Heart right ventricle (tissue), 16 donors: ENCODE measurements at regions of chr11 and their contacts with region 1.

Region 1: GRCh38 chr11:18526521-18527296 is at the start of gene TSG101:
- DNase-seq: peak; percentile 95
- ATAC-seq: peak; percentile 98 to 100 (median 99)
- H3K4me3 ChIP-seq: peak within 1 kb of the TSS; percentile 58 to 99 (median 84)
- H3K27ac ChIP-seq: peak within 1 kb of the TSS; percentile 83 to 97 (median 95)
- H3K4me1 ChIP-seq: peaks cover 5 to 43% (median 30%) of the 10 kb centered on the region in 9 donors
- H3K27me3 ChIP-seq: no peaks in the 10 kb centered on the region
- CTCF ChIP-seq: no peak
- total RNA-seq, gene TSG101: 59.7 to 77.6 (median 68.7) TPM

Region 2: GRCh38 chr11:18321980-18322711 is 204.6 kb before region 1 on chr11 and contains the starts of genes GTF2H1 and HPS5:
- intact Hi-C with region 1: loop called in 3 of 10 experiments (anchors 5 kb)
- DNase-seq: peak; percentile 92 to 97
- ATAC-seq: peak; percentile 98 to 100 (median 99)
- H3K4me3 ChIP-seq: peak within 1 kb of the TSS; percentile 70 to 93 (median 84)
- H3K27ac ChIP-seq: peak within 1 kb of the TSS; percentile 93 to 99 (median 96)
- H3K4me1 ChIP-seq: peaks cover 0 to 59% (median 45%) of the 10 kb centered on the region in 9 donors
- H3K27me3 ChIP-seq: no peaks in the 10 kb centered on the region
- CTCF ChIP-seq: no peak
- total RNA-seq, gene GTF2H1: 19.6 to 27.9 (median 25.2) TPM
- total RNA-seq, gene HPS5: 9.9 to 14.9 (median 12.5) TPM

Region 3: DNA sequence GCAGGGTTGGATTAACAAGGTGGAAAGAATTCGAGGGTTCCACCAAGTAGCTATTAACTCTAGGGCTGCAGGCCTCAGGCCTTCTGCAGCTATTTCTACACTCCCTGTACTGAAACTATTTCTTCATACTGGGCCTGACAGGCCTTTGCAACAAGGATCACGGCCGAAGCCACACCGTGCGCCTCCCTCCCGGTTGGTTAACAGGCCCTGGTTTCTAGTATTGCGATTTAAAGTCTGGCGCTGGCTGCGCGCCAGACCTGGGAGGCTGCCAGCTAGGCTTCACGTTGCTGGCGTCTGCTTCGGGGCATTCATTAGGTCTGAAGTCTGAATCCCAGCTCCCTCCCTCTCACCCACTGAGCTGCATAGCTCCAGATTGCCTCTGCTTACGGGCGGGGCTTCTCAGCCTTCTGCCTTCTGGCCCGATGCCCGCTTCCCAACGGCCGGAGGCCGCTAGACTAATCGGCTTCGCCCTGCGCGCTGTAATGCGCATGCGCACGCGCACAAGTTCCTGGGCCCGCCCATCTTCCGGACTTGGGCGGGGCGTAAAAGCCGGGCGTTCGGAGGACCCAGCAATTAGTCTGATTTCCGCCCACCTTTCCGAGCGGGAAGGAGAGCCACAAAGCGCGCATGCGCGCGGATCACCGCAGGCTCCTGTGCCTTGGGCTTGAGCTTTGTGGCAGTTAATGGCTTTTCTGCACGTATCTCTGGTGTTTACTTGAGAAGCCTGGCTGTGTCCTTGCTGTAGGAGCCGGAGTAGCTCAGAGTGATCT is 130.8 kb before region 1 on chr11:
- intact Hi-C with region 1: loop called in 3 of 10 experiments (anchors 10 kb)
- DNase-seq: peak; percentile 97 to 99
- ATAC-seq: peak; percentile 90 to 96 (median 94)
- H3K4me3 ChIP-seq: peak overlapping the region; percentile 64 to 99 (median 91)
- H3K27ac ChIP-seq: peak overlapping the region; percentile 88 to 100 (median 98)
- H3K4me1 ChIP-seq: peaks cover 4 to 52% (median 14%) of the 10 kb centered on the region in 9 donors
- H3K27me3 ChIP-seq: no peaks in the 10 kb centered on the region
- CTCF ChIP-seq: no peak

Region 4: GRCh38 chr11:18588297-18589252 is 61.9 kb after region 1 on chr11 and contains the start of gene UEVLD:
- intact Hi-C with region 1: loop called in 2 of 10 experiments (anchors 5 to 10 kb)
- DNase-seq: peak; percentile 89 to 93
- ATAC-seq: peak; percentile 96 to 99 (median 99)
- H3K4me3 ChIP-seq: peak within 1 kb of the TSS; percentile 70 to 98 (median 86)
- H3K27ac ChIP-seq: peak within 1 kb of the TSS; percentile 71 to 92 (median 87)
- H3K4me1 ChIP-seq: peaks cover 0 to 48% (median 35%) of the 10 kb centered on the region in 9 donors
- H3K27me3 ChIP-seq: no peaks in the 10 kb centered on the region
- CTCF ChIP-seq: no peak
- total RNA-seq, gene UEVLD: 13.7 to 25.8 (median 18.6) TPM

Region 5: GRCh38 chr11:18608376-18608775 is 81.7 kb after region 1 on chr11:
- intact Hi-C with region 1: no loop called
- DNase-seq: no peak
- ATAC-seq: peak in 3 of 8 donors; percentile 33 to 78 (median 41)
- H3K4me3 ChIP-seq: no peak overlapping the region
- H3K27ac ChIP-seq: peak overlapping the region in 4 of 10 donors; percentile 26 to 48 (median 36)
- H3K4me1 ChIP-seq: peaks cover 0 to 5% (median 0%) of the 10 kb centered on the region in 9 donors
- H3K27me3 ChIP-seq: no peaks in the 10 kb centered on the region
- CTCF ChIP-seq: no peak

Region 6: GRCh38 chr11:18634140-18635032 is 107.7 kb after region 1 on chr11 and contains the start of gene SPTY2D1:
- intact Hi-C with region 1: loop called in 1 of 10 experiments (anchors 2 kb)
- DNase-seq: peak; percentile 99 to 100
- ATAC-seq: peak; percentile 99 to 100 (median 100)
- H3K4me3 ChIP-seq: peak within 1 kb of the TSS; percentile 65 to 96 (median 81)
- H3K27ac ChIP-seq: peak within 1 kb of the TSS; percentile 83 to 96 (median 94)
- H3K4me1 ChIP-seq: peaks cover 4 to 37% (median 13%) of the 10 kb centered on the region in 9 donors
- H3K27me3 ChIP-seq: no peaks in the 10 kb centered on the region
- CTCF ChIP-seq: peak in 2 of 9 donors; percentile 14 to 20
- total RNA-seq, gene SPTY2D1: 7.3 to 18.8 (median 10.2) TPM

Region 7: GRCh38 chr11:18706330-18707243 is 179.9 kb after region 1 on chr11:
- intact Hi-C with region 1: loop called in 1 of 10 experiments (anchors 10 kb)
- DNase-seq: peak; percentile 49 to 86
- ATAC-seq: peak; percentile 55 to 90 (median 78)
- H3K4me3 ChIP-seq: peak overlapping the region; percentile 38 to 65 (median 59)
- H3K27ac ChIP-seq: peak overlapping the region in 9 of 10 donors; percentile 21 to 80 (median 71)
- H3K4me1 ChIP-seq: peaks cover 9 to 51% (median 28%) of the 10 kb centered on the region in 9 donors
- H3K27me3 ChIP-seq: peaks cover 0 to 15% (median 0%) of the 10 kb centered on the region in 7 donors
- CTCF ChIP-seq: no peak

Region 8: DNA sequence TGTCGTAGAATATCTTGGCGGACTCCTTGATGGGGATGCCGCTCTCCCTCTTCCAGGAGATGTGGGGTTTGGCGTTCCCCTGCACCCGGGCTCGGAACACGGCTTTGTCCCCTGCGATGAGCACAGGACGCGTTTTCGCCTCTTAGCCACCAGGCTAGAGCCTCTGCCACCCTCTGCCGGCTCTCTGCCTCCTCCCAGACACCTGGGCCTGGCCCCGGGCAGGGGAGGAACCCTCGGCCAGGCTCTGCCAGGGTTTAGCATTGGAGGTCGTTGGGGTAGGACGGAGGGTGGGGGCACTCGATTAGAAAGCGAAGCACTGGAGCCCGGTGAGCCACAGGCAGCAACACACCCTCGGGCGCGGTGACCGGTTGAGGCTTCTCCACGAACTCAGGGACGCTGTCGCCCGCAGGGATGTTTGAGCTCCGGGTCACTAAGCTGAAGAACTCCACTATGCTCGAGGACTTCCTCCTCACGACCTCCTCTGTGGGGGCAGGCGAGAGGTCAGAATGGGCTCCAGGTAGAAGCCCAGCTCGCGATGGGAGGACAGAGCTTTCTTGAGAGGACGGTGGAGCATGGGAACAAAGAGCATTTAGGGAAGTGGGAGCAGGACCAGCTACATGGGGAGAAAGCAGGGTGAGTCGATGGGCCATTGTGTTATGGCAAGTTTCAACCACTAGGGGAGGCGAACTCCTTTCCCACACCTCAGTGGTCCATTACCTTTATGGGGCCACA is 195.0 kb after region 1 on chr11:
- intact Hi-C with region 1: loop called in 1 of 10 experiments (anchors 10 kb)
- DNase-seq: peak; percentile 26 to 40
- ATAC-seq: peak; percentile 54 to 83 (median 70)
- H3K4me3 ChIP-seq: peak overlapping the region; percentile 33 to 72 (median 61)
- H3K27ac ChIP-seq: peak overlapping the region in 9 of 10 donors; percentile 33 to 63 (median 47)
- H3K4me1 ChIP-seq: peaks cover 0 to 18% (median 10%) of the 10 kb centered on the region in 9 donors
- H3K27me3 ChIP-seq: no peaks in the 10 kb centered on the region
- CTCF ChIP-seq: peak; percentile 61 to 87 (median 71)